Panc1 (cell line): ENCODE measurements at regions of chr11 and their contacts with region 1.

Region 1: GRCh38 chr11:79100093-79100910 is 340.5 kb downstream of the TENM4 start:
- DNase-seq: peak; percentile 43
- ATAC-seq: peak; percentile 89
- H3K4me3 ChIP-seq: no peak overlapping the region
- H3K27ac ChIP-seq: no peak overlapping the region
- H3K4me1 ChIP-seq: no peaks in the 10 kb centered on the region
- H3K27me3 ChIP-seq: no peaks in the 10 kb centered on the region; the same call in 1 of the 2 replicates
- CTCF ChIP-seq: peak; percentile 90

Region 2: GRCh38 chr11:79068356-79068755 is 31.9 kb before region 1 on chr11:
- CTCF ChIA-PET with region 1: no interaction called
- POLR2A ChIA-PET with region 1: no interaction called
- in situ Hi-C with region 1: no loop called
- intact Hi-C with region 1: loop called (anchors 1 kb)
- DNase-seq: no peak
- ATAC-seq: no peak
- H3K4me3 ChIP-seq: no peak overlapping the region
- H3K27ac ChIP-seq: no peak overlapping the region
- H3K4me1 ChIP-seq: no peaks in the 10 kb centered on the region
- H3K27me3 ChIP-seq: no peaks in the 10 kb centered on the region
- CTCF ChIP-seq: no peak

Region 3: GRCh38 chr11:79287952-79288351 is 187.7 kb after region 1 on chr11:
- CTCF ChIA-PET with region 1: no interaction called
- POLR2A ChIA-PET with region 1: no interaction called
- in situ Hi-C with region 1: no loop called
- intact Hi-C with region 1: no loop called
- DNase-seq: no peak
- ATAC-seq: no peak
- H3K4me3 ChIP-seq: no peak overlapping the region
- H3K27ac ChIP-seq: no peak overlapping the region
- H3K4me1 ChIP-seq: no peaks in the 10 kb centered on the region
- H3K27me3 ChIP-seq: no peaks in the 10 kb centered on the region
- CTCF ChIP-seq: no peak